SK-N-SH (cell line): ENCODE measurements at regions of chr1 and their contacts with region 1.

Region 1: DNA sequence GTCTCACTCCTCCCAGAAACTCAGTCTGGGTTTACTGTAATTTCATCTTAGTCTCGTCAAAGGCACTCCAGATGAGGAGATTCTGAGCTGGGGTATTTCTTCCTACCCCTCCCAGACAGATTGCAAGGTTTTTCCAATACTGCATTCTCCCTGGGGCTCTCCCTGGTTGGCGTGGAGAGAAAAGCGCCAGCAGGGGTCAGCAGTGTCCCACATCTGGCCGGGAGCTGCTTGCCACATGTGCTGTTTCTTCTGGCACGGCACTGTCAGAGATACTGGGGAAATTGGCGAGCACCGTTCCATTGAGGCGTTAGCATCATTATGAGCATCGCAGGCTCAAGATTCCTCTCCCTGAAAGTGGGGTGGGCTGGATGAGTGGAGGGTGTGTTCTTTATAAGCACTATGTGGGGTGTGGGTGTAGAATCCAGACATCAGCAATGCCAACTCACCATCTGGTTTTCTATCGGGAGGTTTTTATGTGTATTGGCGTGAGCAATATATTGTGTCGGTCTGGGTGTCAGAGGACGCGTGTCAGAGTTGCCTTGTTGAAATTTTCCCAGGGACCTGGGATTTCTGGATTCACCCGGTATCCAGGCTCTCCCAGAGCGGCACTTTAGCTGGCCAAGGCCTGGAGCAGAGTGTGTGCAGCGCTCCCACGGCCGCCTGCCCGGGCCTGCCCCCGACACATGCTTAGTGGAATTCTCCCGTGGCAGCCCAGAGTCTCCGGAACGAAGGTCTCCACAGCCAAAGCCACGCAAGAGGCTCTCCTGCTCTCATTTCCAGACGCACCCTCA is 8.0 kb upstream of the NAV1 start:
- DNase-seq: peak; percentile 89
- H3K4me3 ChIP-seq: no peak overlapping the region
- H3K27ac ChIP-seq: peak overlapping the region in 1 of 2 experiments; percentile 62; a peak in 2 of 4 replicates
- H3K4me1 ChIP-seq: peaks cover 11 to 36% of the 10 kb centered on the region in 2 experiments; a peak in 3 of 4 replicates
- H3K27me3 ChIP-seq: no peaks in the 10 kb centered on the region
- CTCF ChIP-seq: peak; percentile 90
- EP300 ChIP-seq: no peak
- RAD21 ChIP-seq: peak; percentile 93

Region 2: GRCh38 chr1:201329286-201329685 is 201.7 kb before region 1 on chr1:
- CTCF ChIA-PET with region 1: no interaction called
- POLR2A ChIA-PET with region 1: no interaction called
- DNase-seq: no peak
- H3K4me3 ChIP-seq: no peak overlapping the region
- H3K27ac ChIP-seq: no peak overlapping the region
- H3K4me1 ChIP-seq: peaks cover 0 to 5% of the 10 kb centered on the region in 2 experiments; a peak in 2 of 4 replicates
- H3K27me3 ChIP-seq: no peaks in the 10 kb centered on the region
- CTCF ChIP-seq: no peak
- EP300 ChIP-seq: no peak
- RAD21 ChIP-seq: no peak

Region 3: DNA sequence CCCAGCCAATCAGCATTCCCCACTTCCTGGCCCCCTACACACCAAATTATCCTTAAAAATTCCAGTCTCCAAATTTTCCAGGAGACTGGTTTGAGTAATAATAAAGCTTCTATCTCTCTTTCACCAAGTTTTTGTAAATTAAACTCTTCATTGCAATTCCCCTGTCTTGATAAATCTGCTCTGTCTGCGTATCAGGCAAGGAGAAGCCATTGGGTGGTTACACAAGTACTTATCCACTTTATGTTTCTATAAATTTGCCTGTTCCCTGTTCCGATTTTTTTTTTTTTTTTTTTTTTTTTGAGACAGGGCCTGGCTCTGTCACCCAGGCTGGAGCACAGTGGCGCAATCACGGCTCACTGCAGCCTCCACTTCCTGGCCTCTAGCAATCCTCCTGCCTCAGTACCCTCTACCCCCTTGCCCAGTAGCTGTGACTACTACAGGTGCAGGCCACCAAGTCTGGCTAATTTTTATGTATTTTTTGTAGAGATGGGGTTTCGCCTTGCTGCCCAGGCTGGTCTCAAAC is 12.9 kb before region 1 on chr1:
- CTCF ChIA-PET with region 1: interaction called, 129 read pairs
- POLR2A ChIA-PET with region 1: no interaction called
- DNase-seq: no peak
- H3K4me3 ChIP-seq: no peak overlapping the region
- H3K27ac ChIP-seq: no peak overlapping the region
- H3K4me1 ChIP-seq: no peaks in the 10 kb centered on the region; a peak in 1 of 4 replicates
- H3K27me3 ChIP-seq: no peaks in the 10 kb centered on the region
- CTCF ChIP-seq: no peak
- EP300 ChIP-seq: no peak
- RAD21 ChIP-seq: no peak

Region 4: DNA sequence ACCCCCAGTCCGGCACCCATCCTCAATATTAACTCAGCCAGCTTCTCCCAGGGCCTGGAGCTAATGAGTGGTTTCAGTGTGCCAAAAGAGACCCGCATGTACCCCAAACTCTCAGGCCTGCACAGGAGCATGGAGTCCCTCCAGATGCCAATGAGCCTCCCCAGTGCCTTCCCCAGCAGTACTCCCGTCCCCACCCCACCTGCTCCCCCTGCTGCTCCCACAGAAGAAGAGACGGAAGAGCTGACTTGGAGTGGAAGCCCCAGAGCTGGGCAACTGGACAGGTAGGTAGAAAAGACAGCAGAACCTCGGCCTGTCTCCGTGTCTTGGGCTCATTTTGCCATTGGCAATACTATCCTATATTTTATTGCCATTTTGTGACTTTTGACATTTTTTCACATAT is 252.6 kb after region 1 on chr1:
- CTCF ChIA-PET with region 1: interaction called, 12 read pairs
- POLR2A ChIA-PET with region 1: no interaction called
- DNase-seq: no peak
- H3K4me3 ChIP-seq: no peak overlapping the region
- H3K27ac ChIP-seq: peak overlapping the region in 1 of 2 experiments; percentile 99; a peak in 1 of 4 replicates
- H3K4me1 ChIP-seq: peaks cover 0 to 64% of the 10 kb centered on the region in 2 experiments
- H3K27me3 ChIP-seq: no peaks in the 10 kb centered on the region
- CTCF ChIP-seq: no peak
- EP300 ChIP-seq: no peak
- RAD21 ChIP-seq: no peak